ENCODE measurements at regions of chr4 and their contacts with region 1.

Region 1: GRCh38 chr4:13484122-13484748 is at the start of gene RAB28:
- DNase-seq: peak; percentile 71 to 96
- H3K4me3 ChIP-seq: peak within 1 kb of the TSS; percentile 72 to 97
- H3K27ac ChIP-seq: peak within 1 kb of the TSS; percentile 88 to 98
- H3K4me1 ChIP-seq: peaks cover 6 to 18% of the 10 kb centered on the region in 2 donors
- H3K27me3 ChIP-seq: no peaks in the 10 kb centered on the region
- CTCF ChIP-seq: no peak
- total RNA-seq, gene RAB28: 3.2 TPM

Region 2: DNA sequence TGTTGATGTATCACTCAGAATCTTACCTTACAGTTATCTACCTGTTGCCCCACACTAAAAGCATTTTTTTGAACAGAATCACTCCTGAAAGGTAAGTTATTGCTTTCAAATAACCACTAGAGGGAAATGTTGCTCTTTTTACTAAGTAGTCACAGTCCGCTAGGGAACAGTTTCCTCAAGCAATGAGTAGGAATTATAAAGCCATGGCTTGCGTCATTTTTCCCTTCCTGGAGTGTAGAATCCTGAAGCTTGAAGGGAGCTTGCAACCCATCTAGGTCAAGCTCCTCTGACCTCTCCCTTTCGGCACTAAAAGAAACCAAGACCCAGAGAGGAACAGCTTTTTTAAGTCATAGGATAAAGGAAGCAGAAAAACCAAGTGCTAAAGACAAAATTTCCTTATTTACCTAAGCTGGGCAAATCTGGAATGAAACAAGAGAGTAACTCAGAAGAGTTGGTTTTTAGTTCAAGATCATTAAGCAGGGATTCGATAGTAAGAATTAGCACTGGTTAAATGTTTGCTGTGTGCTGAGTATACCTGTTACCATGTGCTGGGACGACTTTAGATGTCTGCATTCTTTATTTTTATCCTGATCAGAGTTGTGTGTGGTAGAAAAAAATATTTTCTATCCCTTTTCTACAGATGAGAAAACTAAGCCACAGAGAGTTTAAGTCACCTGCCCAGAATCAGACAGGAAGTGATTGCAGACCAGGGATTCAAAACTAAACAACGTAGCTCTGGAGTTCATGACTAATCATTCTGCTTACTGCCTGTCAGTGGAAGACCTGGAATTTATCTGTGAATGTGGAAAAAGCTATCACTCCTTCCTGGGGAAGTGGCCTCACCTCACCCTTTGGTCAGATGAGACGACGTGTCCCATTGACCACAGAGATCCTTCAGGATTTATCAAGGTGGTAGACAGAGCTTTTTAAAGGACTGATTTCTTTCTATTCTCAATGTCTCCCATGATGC is 631.6 kb before region 1 on chr4:
- intact Hi-C with region 1: loop called (anchors 5 kb)
- DNase-seq: no peak
- H3K4me3 ChIP-seq: no peak overlapping the region
- H3K27ac ChIP-seq: no peak overlapping the region
- H3K4me1 ChIP-seq: peaks cover 0 to 2% of the 10 kb centered on the region in 2 donors
- H3K27me3 ChIP-seq: no peaks in the 10 kb centered on the region
- CTCF ChIP-seq: peak; percentile 29 to 69 (median 56)

Region 3: GRCh38 chr4:13059019-13059418 is 425.2 kb before region 1 on chr4:
- intact Hi-C with region 1: loop called (anchors 5 kb)
- DNase-seq: no peak
- H3K4me3 ChIP-seq: no peak overlapping the region
- H3K27ac ChIP-seq: no peak overlapping the region
- H3K4me1 ChIP-seq: peaks cover 0 to 15% of the 10 kb centered on the region in 2 donors
- H3K27me3 ChIP-seq: no peaks in the 10 kb centered on the region
- CTCF ChIP-seq: no peak

Region 4: GRCh38 chr4:13088726-13089658 is 395.2 kb before region 1 on chr4:
- intact Hi-C with region 1: loop called (anchors 5 kb)
- DNase-seq: peak in 1 of 2 donors; percentile 76
- H3K4me3 ChIP-seq: no peak overlapping the region
- H3K27ac ChIP-seq: peak overlapping the region; percentile 73 to 79
- H3K4me1 ChIP-seq: peaks cover 19 to 45% of the 10 kb centered on the region in 2 donors
- H3K27me3 ChIP-seq: no peaks in the 10 kb centered on the region
- CTCF ChIP-seq: no peak

Region 5: GRCh38 chr4:13548984-13549546 is 64.8 kb after region 1 on chr4:
- intact Hi-C with region 1: loop called (anchors 2 kb)
- DNase-seq: peak in 1 of 2 donors; percentile 84
- H3K4me3 ChIP-seq: peak overlapping the region; percentile 24 to 27
- H3K27ac ChIP-seq: no peak overlapping the region
- H3K4me1 ChIP-seq: peaks cover 9 to 18% of the 10 kb centered on the region in 2 donors
- H3K27me3 ChIP-seq: peaks cover 45% of the 10 kb centered on the region
- CTCF ChIP-seq: peak; percentile 72 to 89 (median 82)

Region 6: DNA sequence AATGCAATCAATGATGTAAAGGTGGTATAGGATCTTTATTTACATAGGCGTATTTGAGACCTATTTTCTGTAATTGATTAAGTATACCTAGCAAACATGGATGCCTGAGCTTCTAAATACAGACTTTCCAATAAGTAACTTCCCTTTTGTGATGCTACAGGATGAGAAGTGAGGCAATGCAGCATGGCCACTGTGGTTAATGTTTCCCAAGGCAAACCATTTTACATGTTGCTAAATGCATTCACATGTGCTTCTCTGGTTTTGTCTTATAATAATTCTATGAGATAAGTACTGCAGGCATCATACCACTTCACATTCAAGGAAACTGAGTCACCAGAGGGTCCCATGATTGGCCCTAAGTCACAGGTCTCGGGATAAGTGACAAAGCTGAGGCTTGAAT is 95.8 kb after region 1 on chr4:
- intact Hi-C with region 1: no loop called
- DNase-seq: no peak
- H3K4me3 ChIP-seq: no peak overlapping the region
- H3K27ac ChIP-seq: no peak overlapping the region
- H3K4me1 ChIP-seq: no peaks in the 10 kb centered on the region
- H3K27me3 ChIP-seq: no peaks in the 10 kb centered on the region
- CTCF ChIP-seq: no peak

Region 7: DNA sequence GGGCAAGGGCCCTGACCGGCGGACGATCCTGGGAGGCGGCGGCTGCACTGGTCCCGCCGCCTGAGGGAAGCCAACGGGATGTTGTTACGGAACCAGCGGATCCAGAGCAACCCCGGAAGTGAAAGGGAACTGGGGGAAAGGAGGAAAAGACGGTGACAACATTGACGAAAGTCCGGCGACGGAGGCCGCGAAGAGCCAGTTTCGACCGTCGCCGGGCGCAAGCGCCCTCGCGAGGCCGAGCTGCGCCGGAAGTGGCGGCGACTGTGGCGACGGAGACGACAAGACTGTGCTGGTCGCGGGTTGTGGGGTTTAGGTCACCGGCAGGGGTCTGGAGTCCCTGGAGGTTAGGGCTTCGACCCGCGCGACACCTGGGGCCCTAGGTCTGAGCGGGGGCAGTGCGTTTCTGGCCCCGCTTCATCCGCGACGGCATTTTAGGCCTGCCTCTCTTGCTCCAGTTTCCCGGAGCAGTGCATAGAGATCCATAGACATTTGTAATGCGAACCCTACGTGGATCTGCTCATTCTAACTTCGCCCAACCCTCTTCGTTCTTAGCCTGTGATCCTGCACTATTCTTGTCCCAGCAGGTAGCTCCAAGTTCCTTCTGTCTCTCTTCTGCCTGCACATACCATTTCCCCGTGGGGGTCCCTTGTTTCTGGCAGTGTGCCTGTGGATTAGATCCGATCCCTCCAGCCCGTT is 143.5 kb after region 1 on chr4 and contains the start of gene BOD1L1:
- intact Hi-C with region 1: loop called (anchors 2 kb)
- DNase-seq: peak; percentile 46 to 92
- H3K4me3 ChIP-seq: peak within 1 kb of the TSS; percentile 85 to 93
- H3K27ac ChIP-seq: peak within 1 kb of the TSS; percentile 94 to 96
- H3K4me1 ChIP-seq: peaks cover 0 to 18% of the 10 kb centered on the region in 2 donors
- H3K27me3 ChIP-seq: no peaks in the 10 kb centered on the region
- CTCF ChIP-seq: peak; percentile 36 to 45 (median 39)
- total RNA-seq, gene BOD1L1: 8.4 TPM

Region 8: GRCh38 chr4:13907255-13907751 is 423.1 kb after region 1 on chr4:
- intact Hi-C with region 1: no loop called
- DNase-seq: no peak
- H3K4me3 ChIP-seq: no peak overlapping the region
- H3K27ac ChIP-seq: peak overlapping the region; percentile 1 to 27
- H3K4me1 ChIP-seq: no peaks in the 10 kb centered on the region
- H3K27me3 ChIP-seq: no peaks in the 10 kb centered on the region
- CTCF ChIP-seq: no peak

Measured in ascending aorta (tissue), 2 donors.